ENCODE measurements at regions of chr10 and their contacts with region 1.

Region 1: GRCh38 chr10:69179743-69180524 is at the start of gene SUPV3L1:
- DNase-seq: peak; percentile 95
- total RNA-seq, gene SUPV3L1: 30.0 TPM

Region 2: DNA sequence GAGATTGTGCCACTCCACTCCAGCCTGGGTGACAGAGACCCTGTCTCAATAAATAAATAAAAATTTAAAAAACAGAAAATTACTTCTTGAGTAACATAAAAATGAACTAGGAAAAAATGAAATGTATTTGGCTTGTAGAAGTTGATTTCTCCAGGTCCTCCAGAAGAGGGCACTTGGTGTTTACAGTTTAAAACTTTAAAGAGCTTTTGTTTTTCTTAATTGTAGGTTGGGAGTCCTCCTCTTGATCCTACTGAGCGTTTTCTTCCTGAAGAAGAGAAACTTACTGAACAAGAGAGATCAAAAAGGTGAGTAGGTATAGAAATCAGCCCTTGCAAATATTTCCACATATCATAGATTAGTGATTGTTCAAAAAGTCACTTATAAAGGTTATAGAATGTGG is 175.1 kb before region 1 on chr10:
- intact Hi-C with region 1: loop called (anchors 10 kb)
- DNase-seq: no peak

Region 3: GRCh38 chr10:69123747-69124562 is 56.0 kb before region 1 on chr10 and contains the start of gene VPS26A:
- intact Hi-C with region 1: loop called (anchors 5 kb)
- DNase-seq: peak; percentile 100
- total RNA-seq, gene VPS26A: 31.7 TPM

Region 4: DNA sequence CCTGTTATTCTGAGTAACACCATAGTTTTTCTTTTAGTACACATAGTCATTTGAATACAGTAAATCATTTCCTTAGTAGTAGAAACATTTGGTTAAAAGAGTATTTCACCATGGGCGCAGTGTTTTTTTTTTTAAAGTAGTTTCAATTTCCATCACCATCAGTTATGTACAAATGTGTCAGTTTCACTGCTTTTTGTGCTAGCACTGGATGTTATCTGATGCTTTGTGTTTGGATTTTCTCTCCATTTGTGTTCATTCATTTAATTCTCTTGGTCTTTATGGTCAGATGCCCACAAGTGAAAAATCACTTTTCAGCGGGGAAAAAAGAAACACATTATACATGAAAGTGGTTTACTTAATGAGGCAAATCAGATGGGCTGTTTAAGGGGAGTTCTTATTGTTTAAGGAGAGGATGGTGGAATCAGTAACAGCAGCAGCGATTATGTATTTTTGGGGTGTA is 82.4 kb after region 1 on chr10:
- intact Hi-C with region 1: no loop called
- DNase-seq: no peak